Psoas muscle (tissue), 8 donors: ENCODE measurements at regions of chr12 and their contacts with region 1.

Region 1: DNA sequence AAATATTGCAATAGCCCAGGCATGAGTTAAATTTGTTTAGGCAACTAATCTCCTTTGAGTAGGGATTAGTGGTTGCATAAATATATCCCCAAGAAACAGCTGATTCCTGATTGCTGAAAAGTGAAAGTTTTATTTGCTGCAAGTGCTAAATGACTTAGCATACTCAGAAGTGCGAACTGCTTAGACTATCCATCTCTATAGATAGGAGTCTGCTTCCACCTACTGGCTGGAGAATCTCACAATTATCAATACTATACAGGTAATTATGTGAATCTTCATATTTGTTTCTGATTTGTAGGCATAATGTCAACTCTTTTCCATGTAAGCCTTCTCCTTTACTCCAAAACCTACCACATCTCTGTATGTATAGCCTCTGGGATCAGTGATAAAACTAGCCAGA is 11.9 kb upstream of the SLCO1B3 start:
- DNase-seq: no peak
- ATAC-seq: no peak
- H3K4me3 ChIP-seq: no peak overlapping the region
- H3K27ac ChIP-seq: no peak overlapping the region
- H3K4me1 ChIP-seq: no peaks in the 10 kb centered on the region
- H3K27me3 ChIP-seq: peaks cover 0 to 2% (median 0%) of the 10 kb centered on the region in 3 donors
- CTCF ChIP-seq: no peak

Region 2: GRCh38 chr12:20646239-20646827 is 152.2 kb before region 1 on chr12:
- intact Hi-C with region 1: loop called in 1 of 2 experiments (anchors 10 kb)
- DNase-seq: no peak
- ATAC-seq: no peak
- H3K4me3 ChIP-seq: no peak overlapping the region
- H3K27ac ChIP-seq: no peak overlapping the region
- H3K4me1 ChIP-seq: no peaks in the 10 kb centered on the region
- H3K27me3 ChIP-seq: no peaks in the 10 kb centered on the region
- CTCF ChIP-seq: peak; percentile 36